CD4-positive, alpha-beta T cell (primary cell): ENCODE measurements at regions of chr7 and their contacts with region 1.

Region 1: GRCh38 chr7:13336227-13336626 is 648.8 kb downstream of the ARL4A start:
- DNase-seq: no peak
- ATAC-seq: no peak
- H3K4me3 ChIP-seq: no peak overlapping the region
- H3K4me3 Mint-ChIP-seq: no peak overlapping the region
- H3K27ac ChIP-seq: no peak overlapping the region
- H3K27ac Mint-ChIP-seq: no peak overlapping the region
- H3K4me1 ChIP-seq: no peaks in the 10 kb centered on the region
- H3K4me1 Mint-ChIP-seq: no peaks in the 10 kb centered on the region
- H3K27me3 ChIP-seq: no peaks in the 10 kb centered on the region
- H3K27me3 Mint-ChIP-seq: no peaks in the 10 kb centered on the region
- CTCF ChIP-seq: no peak

Region 2: GRCh38 chr7:13169356-13169755 is 166.9 kb before region 1 on chr7:
- CTCF ChIA-PET with region 1: no interaction called
- POLR2A ChIA-PET with region 1: no interaction called
- intact Hi-C with region 1: no loop called
- DNase-seq: no peak
- ATAC-seq: no peak
- H3K4me3 ChIP-seq: no peak overlapping the region
- H3K4me3 Mint-ChIP-seq: no peak overlapping the region
- H3K27ac ChIP-seq: no peak overlapping the region
- H3K27ac Mint-ChIP-seq: no peak overlapping the region
- H3K4me1 ChIP-seq: no peaks in the 10 kb centered on the region
- H3K4me1 Mint-ChIP-seq: no peaks in the 10 kb centered on the region
- H3K27me3 ChIP-seq: no peaks in the 10 kb centered on the region
- H3K27me3 Mint-ChIP-seq: peaks cover 19% of the 10 kb centered on the region
- CTCF ChIP-seq: no peak

Region 3: GRCh38 chr7:13359656-13360055 is 23.4 kb after region 1 on chr7:
- CTCF ChIA-PET with region 1: no interaction called
- POLR2A ChIA-PET with region 1: no interaction called
- intact Hi-C with region 1: loop called in 1 of 2 experiments (anchors 1 kb)
- DNase-seq: peak in 1 of 14 experiments; percentile 0
- ATAC-seq: no peak
- H3K4me3 ChIP-seq: no peak overlapping the region
- H3K4me3 Mint-ChIP-seq: no peak overlapping the region
- H3K27ac ChIP-seq: no peak overlapping the region
- H3K27ac Mint-ChIP-seq: no peak overlapping the region
- H3K4me1 ChIP-seq: no peaks in the 10 kb centered on the region
- H3K4me1 Mint-ChIP-seq: no peaks in the 10 kb centered on the region
- H3K27me3 ChIP-seq: no peaks in the 10 kb centered on the region
- H3K27me3 Mint-ChIP-seq: no peaks in the 10 kb centered on the region
- CTCF ChIP-seq: no peak

Region 4: DNA sequence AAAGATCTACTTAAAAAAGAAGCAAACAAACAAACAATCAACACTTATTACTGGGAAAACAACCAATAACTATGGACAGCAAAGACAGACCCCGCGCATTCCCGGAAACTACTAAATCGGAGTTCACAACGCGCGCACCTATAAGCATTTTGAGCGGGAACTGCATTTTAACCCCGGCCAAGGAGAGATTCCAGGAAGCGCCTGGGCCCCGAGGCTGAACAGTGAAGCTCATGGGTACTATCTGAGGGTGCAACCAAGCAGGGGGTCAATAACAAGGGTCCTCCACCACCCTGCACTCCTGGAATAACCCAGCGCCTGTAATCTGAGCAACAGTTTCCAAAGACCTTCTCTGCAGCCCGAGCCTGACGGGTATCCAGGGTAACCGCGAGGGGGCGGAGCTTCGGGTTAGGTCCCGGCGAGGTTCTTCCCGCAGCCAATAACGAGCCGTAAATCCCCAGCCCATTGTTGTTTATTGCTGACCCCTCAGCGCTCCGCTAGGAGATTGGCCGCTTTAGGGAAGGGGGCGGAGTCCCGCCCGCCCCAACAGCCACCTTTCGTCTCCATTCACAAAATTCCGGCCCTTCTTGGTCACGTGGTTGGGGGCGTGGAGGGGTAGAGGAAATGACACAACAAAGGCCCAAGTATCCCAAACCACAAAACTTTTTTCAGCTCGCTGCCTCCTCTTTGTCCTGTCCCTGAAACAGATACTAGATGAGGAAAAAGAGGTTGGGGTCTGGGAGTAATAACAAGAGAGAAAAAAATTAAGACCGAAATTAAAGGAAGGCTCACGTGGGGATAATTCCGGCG is 655.0 kb after region 1 on chr7:
- CTCF ChIA-PET with region 1: no interaction called
- POLR2A ChIA-PET with region 1: no interaction called
- intact Hi-C with region 1: no loop called
- DNase-seq: peak in 12 of 14 experiments; percentile 15 to 84 (median 32)
- ATAC-seq: peak; percentile 54
- H3K4me3 ChIP-seq: peak overlapping the region; percentile 56
- H3K4me3 Mint-ChIP-seq: no peak overlapping the region
- H3K27ac ChIP-seq: no peak overlapping the region
- H3K27ac Mint-ChIP-seq: no peak overlapping the region
- H3K4me1 ChIP-seq: peaks cover 34% of the 10 kb centered on the region
- H3K4me1 Mint-ChIP-seq: no peaks in the 10 kb centered on the region
- H3K27me3 ChIP-seq: peaks cover 23 to 32% of the 10 kb centered on the region in 2 experiments
- H3K27me3 Mint-ChIP-seq: peaks cover 22% of the 10 kb centered on the region
- CTCF ChIP-seq: no peak